H1 (cell line): ENCODE measurements at regions of chr1 and their contacts with region 1.

Region 1: GRCh38 chr1:6269720-6270400 is 9.0 kb upstream of the GPR153 start:
- DNase-seq: no peak
- H3K4me3 ChIP-seq: no peak overlapping the region
- H3K27ac ChIP-seq: no peak overlapping the region
- H3K4me1 ChIP-seq: peaks cover 0 to 18% (median 8%) of the 10 kb centered on the region in 4 experiments; a peak in 6 of 7 replicates
- H3K27me3 ChIP-seq: no peaks in the 10 kb centered on the region
- CTCF ChIP-seq: no peak
- EP300 ChIP-seq: no peak
- POLR2A ChIP-seq: no peak
- RAD21 ChIP-seq: no peak

Region 2: GRCh38 chr1:5992026-5992813 is 277.6 kb before region 1 on chr1 and contains the start of gene NPHP4:
- CTCF ChIA-PET with region 1: no interaction called
- POLR2A ChIA-PET with region 1: no interaction called
- DNase-seq: peak; percentile 99 to 100
- H3K4me3 ChIP-seq: peak within 1 kb of the TSS; percentile 76 to 93 (median 84)
- H3K27ac ChIP-seq: peak within 1 kb of the TSS; percentile 83; the same call in 1 of the 2 replicates
- H3K4me1 ChIP-seq: peaks cover 5 to 20% (median 11%) of the 10 kb centered on the region in 4 experiments
- H3K27me3 ChIP-seq: peaks cover 0 to 36% (median 21%) of the 10 kb centered on the region in 4 experiments; a peak in 5 of 7 replicates
- CTCF ChIP-seq: no peak
- EP300 ChIP-seq: peak in 1 of 2 experiments; percentile 90; a peak in 2 of 3 replicates
- POLR2A ChIP-seq: no peak
- RAD21 ChIP-seq: no peak
- total RNA-seq, gene NPHP4: 13.6 and 14.0 TPM in 2 replicates

Region 3: GRCh38 chr1:6330410-6330911 is 60.6 kb after region 1 on chr1:
- CTCF ChIA-PET with region 1: interaction called, 11 read pairs
- POLR2A ChIA-PET with region 1: no interaction called
- DNase-seq: no peak
- H3K4me3 ChIP-seq: no peak overlapping the region
- H3K27ac ChIP-seq: no peak overlapping the region
- H3K4me1 ChIP-seq: peaks cover 0 to 2% (median under 1%) of the 10 kb centered on the region in 4 experiments; a peak in 3 of 7 replicates
- H3K27me3 ChIP-seq: no peaks in the 10 kb centered on the region
- CTCF ChIP-seq: no peak
- EP300 ChIP-seq: no peak
- POLR2A ChIP-seq: no peak
- RAD21 ChIP-seq: no peak

Region 4: DNA sequence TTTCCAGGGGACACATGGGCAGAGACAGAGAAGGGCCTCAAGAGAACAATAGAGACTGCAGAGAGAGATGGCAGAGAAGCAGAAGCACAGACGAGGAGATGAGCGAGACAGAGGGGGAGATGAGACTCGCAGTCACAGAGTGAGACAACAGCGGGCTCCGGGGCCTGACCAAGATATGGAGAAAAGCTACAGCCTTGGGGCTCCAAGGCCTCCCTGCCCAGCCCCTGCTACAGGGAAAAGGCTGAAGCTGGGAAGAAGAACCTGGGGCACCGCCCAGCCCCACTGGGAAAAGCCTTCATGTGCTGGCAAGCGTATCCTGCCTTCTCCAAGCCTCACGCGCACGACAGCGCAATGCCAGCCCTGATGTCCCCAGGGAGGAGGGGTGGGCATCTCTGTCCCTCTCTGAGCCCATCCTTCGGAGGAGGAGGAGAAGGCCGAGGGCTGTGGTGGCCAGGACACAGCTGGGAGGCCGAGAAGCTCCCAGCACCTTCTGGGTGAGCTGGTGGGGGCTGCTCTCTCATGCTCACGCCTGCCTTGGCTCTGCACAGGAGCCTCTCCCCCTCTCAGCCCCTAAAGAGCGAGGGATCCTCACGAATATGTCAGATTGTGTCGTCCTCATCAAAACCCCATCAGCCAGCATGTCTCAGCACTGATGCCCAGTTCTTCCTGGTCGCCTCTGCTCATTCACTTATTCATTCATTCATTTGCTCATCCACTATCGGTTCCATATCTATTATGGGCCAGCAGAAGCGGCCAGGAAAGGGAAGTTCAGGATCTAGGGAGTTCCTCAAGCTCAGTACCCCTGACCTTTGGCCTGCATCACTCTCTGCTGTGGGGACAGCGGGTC is 67.1 kb after region 1 on chr1:
- CTCF ChIA-PET with region 1: interaction called, 40 read pairs
- POLR2A ChIA-PET with region 1: no interaction called
- DNase-seq: no peak
- H3K4me3 ChIP-seq: no peak overlapping the region
- H3K27ac ChIP-seq: no peak overlapping the region
- H3K4me1 ChIP-seq: peaks cover 9 to 18% (median 13%) of the 10 kb centered on the region in 4 experiments; a peak in 6 of 7 replicates
- H3K27me3 ChIP-seq: no peaks in the 10 kb centered on the region
- CTCF ChIP-seq: no peak
- EP300 ChIP-seq: no peak
- POLR2A ChIP-seq: no peak
- RAD21 ChIP-seq: no peak